OCI-LY7 (cell line): ENCODE measurements at regions of chr21 and their contacts with region 1.

Region 1: GRCh38 chr21:35226948-35227744 is 178.0 kb upstream of the RUNX1 start:
- DNase-seq: peak; percentile 98
- H3K4me3 ChIP-seq: peak overlapping the region; percentile 59
- H3K27ac ChIP-seq: peak overlapping the region; percentile 98
- H3K4me1 ChIP-seq: peaks cover 86% of the 10 kb centered on the region
- CTCF ChIP-seq: no peak

Region 2: GRCh38 chr21:34745557-34746255 is 481.4 kb before region 1 on chr21:
- CTCF ChIA-PET with region 1: no interaction called
- POLR2A ChIA-PET with region 1: no interaction called
- intact Hi-C with region 1: loop called (anchors 5 kb)
- DNase-seq: peak; percentile 69
- H3K4me3 ChIP-seq: peak overlapping the region; percentile 12
- H3K27ac ChIP-seq: no peak overlapping the region
- H3K4me1 ChIP-seq: no peaks in the 10 kb centered on the region
- CTCF ChIP-seq: peak; percentile 93

Region 3: GRCh38 chr21:34888569-34889319 is 338.4 kb before region 1 on chr21:
- CTCF ChIA-PET with region 1: no interaction called
- POLR2A ChIA-PET with region 1: no interaction called
- intact Hi-C with region 1: loop called (anchors 2 kb)
- DNase-seq: peak; percentile 72
- H3K4me3 ChIP-seq: peak overlapping the region; percentile 81
- H3K27ac ChIP-seq: peak overlapping the region; percentile 46
- H3K4me1 ChIP-seq: peaks cover 23% of the 10 kb centered on the region
- CTCF ChIP-seq: no peak

Region 4: GRCh38 chr21:35026617-35027562 is 200.3 kb before region 1 on chr21:
- CTCF ChIA-PET with region 1: no interaction called
- POLR2A ChIA-PET with region 1: interaction called, 3 read pairs
- intact Hi-C with region 1: loop called (anchors 1 kb)
- DNase-seq: peak; percentile 93
- H3K4me3 ChIP-seq: peak overlapping the region; percentile 65
- H3K27ac ChIP-seq: peak overlapping the region; percentile 97
- H3K4me1 ChIP-seq: peaks cover 69% of the 10 kb centered on the region
- CTCF ChIP-seq: peak; percentile 21; the same call in 1 of the 2 replicates

Region 5: GRCh38 chr21:35189077-35189863 is 37.9 kb before region 1 on chr21:
- CTCF ChIA-PET with region 1: no interaction called
- POLR2A ChIA-PET with region 1: interaction called, 3 read pairs
- intact Hi-C with region 1: loop called (anchors 1 kb)
- DNase-seq: peak; percentile 91
- H3K4me3 ChIP-seq: peak overlapping the region; percentile 59
- H3K27ac ChIP-seq: peak overlapping the region; percentile 71
- H3K4me1 ChIP-seq: peaks cover 35% of the 10 kb centered on the region
- CTCF ChIP-seq: no peak

Region 6: DNA sequence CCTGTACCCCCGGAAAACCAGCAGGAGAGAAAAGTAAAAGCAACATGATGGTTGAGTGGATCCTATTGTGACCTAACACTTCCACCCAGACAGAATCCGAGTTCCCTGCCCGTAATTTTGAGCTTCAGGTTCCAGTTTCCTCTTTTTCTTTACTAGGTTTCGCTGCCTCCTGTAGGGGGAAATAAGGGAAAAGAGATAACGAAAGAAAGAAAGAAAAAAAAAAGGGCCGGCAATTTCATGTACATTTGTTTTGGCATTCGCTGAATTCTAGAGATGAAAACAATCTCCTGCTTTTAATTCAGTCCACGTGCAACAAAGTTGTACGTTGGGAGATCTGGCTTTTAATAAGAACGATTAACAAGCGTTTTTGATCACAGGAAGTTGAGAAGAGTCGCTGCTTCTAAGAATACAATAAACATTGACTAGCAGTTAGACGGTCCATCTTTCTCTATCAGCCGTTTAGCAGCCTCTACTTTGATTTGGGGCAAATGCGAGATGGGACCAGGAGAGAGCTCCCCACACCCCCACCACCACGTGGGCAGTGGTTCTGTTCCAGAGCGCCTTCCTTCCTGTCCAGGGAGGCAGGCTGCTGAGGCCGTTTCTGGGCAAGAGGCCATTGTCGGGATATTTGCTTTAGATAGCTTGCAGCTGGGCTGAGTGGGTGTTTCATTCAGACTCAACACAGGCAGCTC is 22.1 kb before region 1 on chr21:
- CTCF ChIA-PET with region 1: no interaction called
- POLR2A ChIA-PET with region 1: interaction called, 7 read pairs
- intact Hi-C with region 1: loop called (anchors 1 kb)
- DNase-seq: peak; percentile 54
- H3K4me3 ChIP-seq: peak overlapping the region; percentile 36
- H3K27ac ChIP-seq: peak overlapping the region; percentile 76
- H3K4me1 ChIP-seq: peaks cover 37% of the 10 kb centered on the region
- CTCF ChIP-seq: peak; percentile 57

Region 7: GRCh38 chr21:35400233-35400957 is 173.2 kb after region 1 on chr21:
- CTCF ChIA-PET with region 1: no interaction called
- POLR2A ChIA-PET with region 1: no interaction called
- intact Hi-C with region 1: loop called (anchors 2 kb)
- DNase-seq: peak; percentile 86
- H3K4me3 ChIP-seq: peak overlapping the region; percentile 52
- H3K27ac ChIP-seq: no peak overlapping the region
- H3K4me1 ChIP-seq: peaks cover 20% of the 10 kb centered on the region
- CTCF ChIP-seq: peak; percentile 95